ENCODE measurements at regions of chr7 and their contacts with region 1.

Region 1: DNA sequence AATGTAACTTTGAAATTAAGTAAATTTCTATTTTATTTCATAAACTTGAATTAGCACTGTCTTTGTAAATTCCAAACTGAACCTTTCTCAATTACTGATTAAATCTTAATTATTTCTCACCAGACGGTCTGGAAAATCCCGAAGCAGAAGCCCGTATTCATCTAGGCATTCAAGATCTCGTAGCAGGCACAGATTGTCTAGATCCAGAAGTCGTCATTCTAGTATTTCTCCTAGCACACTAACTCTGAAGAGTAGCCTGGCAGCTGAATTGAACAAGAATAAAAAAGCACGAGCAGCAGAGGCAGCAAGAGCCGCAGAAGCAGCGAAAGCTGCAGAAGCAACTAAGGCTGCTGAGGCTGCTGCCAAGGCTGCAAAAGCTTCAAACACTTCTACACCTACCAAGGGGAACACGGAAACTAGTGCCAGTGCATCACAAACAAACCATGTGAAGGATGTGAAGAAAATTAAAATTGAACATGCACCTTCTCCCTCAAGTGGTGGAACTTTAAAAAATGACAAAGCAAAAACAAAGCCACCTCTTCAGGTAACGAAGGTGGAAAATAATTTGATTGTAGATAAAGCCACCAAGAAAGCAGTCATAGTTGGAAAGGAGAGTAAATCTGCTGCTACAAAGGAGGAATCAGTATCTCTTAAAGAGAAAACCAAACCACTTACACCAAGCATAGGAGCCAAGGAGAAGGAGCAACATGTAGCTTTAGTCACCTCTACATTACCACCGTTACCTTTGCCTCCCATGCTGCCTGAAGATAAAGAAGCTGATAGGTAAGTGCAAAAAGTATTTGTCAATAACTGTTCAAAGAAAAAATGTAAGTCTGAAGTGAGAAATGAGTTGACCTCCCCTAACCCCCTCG is 37.7 kb downstream of the CDK13 start:
- DNase-seq: peak in 30 of 35 experiments; percentile 3 to 74 (median 38)
- ATAC-seq: peak; percentile 77 to 94 (median 90)
- H3K4me3 ChIP-seq: no peak overlapping the region
- H3K4me3 Mint-ChIP-seq: peak overlapping the region in 2 of 3 donors; percentile 29 to 40
- H3K27ac ChIP-seq: no peak overlapping the region
- H3K27ac Mint-ChIP-seq: peak overlapping the region; percentile 73 to 77
- H3K4me1 ChIP-seq: peaks cover 18 to 21% of the 10 kb centered on the region in 2 experiments
- H3K4me1 Mint-ChIP-seq: peaks cover 57 to 69% (median 61%) of the 10 kb centered on the region in 3 donors
- H3K27me3 ChIP-seq: no peaks in the 10 kb centered on the region
- H3K27me3 Mint-ChIP-seq: no peaks in the 10 kb centered on the region

Region 2: DNA sequence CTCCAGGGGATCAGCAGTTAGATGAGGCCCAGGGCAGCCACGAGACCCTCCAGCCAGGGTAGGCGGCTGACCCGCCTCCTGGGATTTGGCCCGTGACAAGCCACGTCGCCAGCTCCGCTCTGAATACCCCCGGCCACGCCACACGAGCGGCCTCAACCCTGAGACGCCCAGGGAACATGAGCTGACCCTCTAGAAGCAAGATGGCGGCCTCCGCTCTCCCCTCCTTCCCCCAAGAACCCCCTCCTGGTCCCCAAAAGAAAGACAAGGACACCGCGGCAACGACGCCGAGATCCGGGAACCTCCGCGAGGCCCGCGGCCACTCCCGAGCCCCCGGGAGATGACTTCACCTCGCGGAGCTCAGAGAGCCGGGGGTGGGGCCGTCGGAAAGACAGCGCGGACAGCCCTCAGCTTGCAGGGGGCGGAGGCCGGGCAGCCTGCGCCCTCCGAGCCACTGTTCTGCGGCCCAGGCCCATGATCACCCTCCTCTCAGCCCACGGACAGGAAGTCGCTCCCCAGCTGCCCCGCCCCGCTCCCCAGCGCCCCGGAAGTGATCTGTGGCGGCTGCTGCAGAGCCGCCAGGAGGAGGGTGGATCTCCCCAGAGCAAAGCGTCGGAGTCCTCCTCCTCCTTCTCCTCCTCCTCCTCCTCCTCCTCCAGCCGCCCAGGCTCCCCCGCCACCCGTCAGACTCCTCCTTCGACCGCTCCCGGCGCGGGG is 364.5 kb before region 1 on chr7 and contains the start of gene RALA:
- CTCF ChIA-PET with region 1: interaction called in 1 of 2 experiments, 13 read pairs
- POLR2A ChIA-PET with region 1: no interaction called
- DNase-seq: peak; percentile 77 to 93 (median 88)
- ATAC-seq: peak; percentile 94 to 96 (median 94)
- H3K4me3 ChIP-seq: peak within 1 kb of the TSS; percentile 85 to 92
- H3K4me3 Mint-ChIP-seq: peak within 1 kb of the TSS; percentile 94 to 99 (median 99)
- H3K27ac ChIP-seq: peak within 1 kb of the TSS; percentile 87
- H3K27ac Mint-ChIP-seq: peak within 1 kb of the TSS; percentile 95 to 96
- H3K4me1 ChIP-seq: peaks cover 18 to 33% of the 10 kb centered on the region in 2 experiments
- H3K4me1 Mint-ChIP-seq: peaks cover 52% of the 10 kb centered on the region in 3 donors
- H3K27me3 ChIP-seq: no peaks in the 10 kb centered on the region
- H3K27me3 Mint-ChIP-seq: no peaks in the 10 kb centered on the region
- total RNA-seq, gene RALA: 24.4 to 49.8 (median 36.7) TPM

Region 3: GRCh38 chr7:39702133-39702532 is 285.6 kb before region 1 on chr7:
- CTCF ChIA-PET with region 1: no interaction called
- POLR2A ChIA-PET with region 1: no interaction called
- DNase-seq: no peak
- ATAC-seq: no peak
- H3K4me3 ChIP-seq: no peak overlapping the region
- H3K4me3 Mint-ChIP-seq: no peak overlapping the region
- H3K27ac ChIP-seq: no peak overlapping the region
- H3K27ac Mint-ChIP-seq: peak overlapping the region in 1 of 2 donors; percentile 70
- H3K4me1 ChIP-seq: no peaks in the 10 kb centered on the region
- H3K4me1 Mint-ChIP-seq: peaks cover 0 to 4% (median 2%) of the 10 kb centered on the region in 3 donors
- H3K27me3 ChIP-seq: no peaks in the 10 kb centered on the region
- H3K27me3 Mint-ChIP-seq: no peaks in the 10 kb centered on the region

Region 4: DNA sequence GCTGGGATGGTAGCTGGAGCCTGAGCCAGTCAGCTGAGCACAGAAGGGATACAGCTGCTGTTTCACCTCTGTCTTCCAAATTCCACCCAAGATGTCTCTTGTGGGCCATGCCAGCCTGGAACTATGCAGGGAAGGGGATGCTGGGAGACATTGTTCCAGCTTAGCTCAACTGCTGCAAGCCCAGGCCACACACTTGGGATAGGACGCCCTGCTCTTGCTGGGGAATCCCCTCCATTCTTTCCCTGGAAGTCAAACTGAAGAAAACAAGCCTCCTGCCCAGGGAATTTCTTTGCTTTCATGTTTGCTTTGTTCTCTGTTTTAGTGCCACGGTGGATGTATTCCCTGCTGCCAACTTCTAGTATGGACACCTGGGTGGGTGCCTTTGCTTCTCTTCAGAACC is 92.8 kb before region 1 on chr7:
- CTCF ChIA-PET with region 1: interaction called, 7 to 11 read pairs
- POLR2A ChIA-PET with region 1: no interaction called
- DNase-seq: no peak
- ATAC-seq: no peak
- H3K4me3 ChIP-seq: no peak overlapping the region
- H3K4me3 Mint-ChIP-seq: no peak overlapping the region
- H3K27ac ChIP-seq: no peak overlapping the region
- H3K27ac Mint-ChIP-seq: no peak overlapping the region
- H3K4me1 ChIP-seq: peaks cover 0 to 3% of the 10 kb centered on the region in 2 experiments
- H3K4me1 Mint-ChIP-seq: peaks cover 0 to 3% (median 0%) of the 10 kb centered on the region in 3 donors
- H3K27me3 ChIP-seq: peaks cover 0 to 12% of the 10 kb centered on the region in 2 experiments
- H3K27me3 Mint-ChIP-seq: peaks cover 0 to 5% of the 10 kb centered on the region in 2 donors

Region 5: DNA sequence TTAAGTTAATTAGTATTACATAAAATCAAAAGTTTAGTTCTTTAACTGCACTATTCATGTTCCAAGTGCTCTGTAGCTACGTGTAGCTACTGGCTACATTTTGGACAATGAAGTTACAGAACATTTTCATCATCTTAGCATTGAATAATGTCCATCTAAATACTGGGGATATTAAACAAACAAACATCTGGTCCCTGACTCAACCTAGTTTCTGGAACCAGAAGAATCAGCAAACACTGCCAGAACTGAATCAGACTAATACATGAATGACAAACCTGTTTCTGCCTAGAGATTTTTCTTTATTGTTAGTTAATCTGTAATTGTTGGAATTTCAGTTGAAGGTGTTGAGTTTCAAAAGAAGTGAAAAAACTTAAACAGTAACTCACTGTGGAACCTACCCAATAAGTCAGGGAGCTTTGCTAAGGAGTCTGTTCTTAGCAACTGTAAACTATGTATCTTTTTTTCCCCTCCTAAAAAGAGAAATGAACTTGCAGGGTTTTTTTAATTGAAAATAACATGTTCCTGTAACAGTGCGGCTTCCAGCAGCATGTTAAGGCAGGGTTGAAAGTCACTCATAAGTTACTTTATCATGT is 20.6 kb after region 1 on chr7:
- CTCF ChIA-PET with region 1: no interaction called
- POLR2A ChIA-PET with region 1: no interaction called
- DNase-seq: no peak
- ATAC-seq: no peak
- H3K4me3 ChIP-seq: no peak overlapping the region
- H3K4me3 Mint-ChIP-seq: no peak overlapping the region
- H3K27ac ChIP-seq: no peak overlapping the region
- H3K27ac Mint-ChIP-seq: no peak overlapping the region
- H3K4me1 ChIP-seq: no peaks in the 10 kb centered on the region
- H3K4me1 Mint-ChIP-seq: peaks cover 9 to 16% (median 12%) of the 10 kb centered on the region in 3 donors
- H3K27me3 ChIP-seq: no peaks in the 10 kb centered on the region
- H3K27me3 Mint-ChIP-seq: no peaks in the 10 kb centered on the region

Region 6: DNA sequence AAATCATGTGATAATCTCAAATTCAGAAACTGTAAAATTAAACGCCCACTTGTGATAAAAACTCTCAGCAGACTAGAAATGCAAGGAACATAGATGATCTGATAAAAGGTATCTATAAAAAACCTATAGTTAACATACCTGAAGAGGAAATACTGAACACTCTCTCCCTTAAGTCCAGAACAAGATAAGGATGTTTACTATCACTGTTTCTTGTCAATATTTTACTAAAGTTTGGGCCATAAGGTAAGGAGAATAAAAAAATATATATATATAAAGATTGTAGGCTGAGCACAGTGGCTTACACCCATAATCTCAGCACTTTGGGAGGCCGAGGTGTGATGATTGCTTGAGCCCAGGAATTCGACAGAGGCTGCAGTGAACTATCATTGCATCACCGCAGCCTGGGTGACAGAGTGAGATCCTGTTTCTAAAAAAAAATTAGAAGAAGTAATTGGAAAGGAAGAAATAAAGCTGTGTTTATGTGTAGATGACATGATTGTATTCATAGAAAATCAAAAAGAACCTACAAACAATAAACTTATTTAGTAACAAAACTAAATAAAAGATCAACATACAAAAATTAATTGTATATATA is 118.3 kb after region 1 on chr7:
- CTCF ChIA-PET with region 1: no interaction called
- POLR2A ChIA-PET with region 1: no interaction called
- DNase-seq: no peak
- ATAC-seq: no peak
- H3K4me3 ChIP-seq: no peak overlapping the region
- H3K4me3 Mint-ChIP-seq: no peak overlapping the region
- H3K27ac ChIP-seq: no peak overlapping the region
- H3K27ac Mint-ChIP-seq: no peak overlapping the region
- H3K4me1 ChIP-seq: no peaks in the 10 kb centered on the region
- H3K4me1 Mint-ChIP-seq: no peaks in the 10 kb centered on the region
- H3K27me3 ChIP-seq: no peaks in the 10 kb centered on the region
- H3K27me3 Mint-ChIP-seq: no peaks in the 10 kb centered on the region

Region 7: DNA sequence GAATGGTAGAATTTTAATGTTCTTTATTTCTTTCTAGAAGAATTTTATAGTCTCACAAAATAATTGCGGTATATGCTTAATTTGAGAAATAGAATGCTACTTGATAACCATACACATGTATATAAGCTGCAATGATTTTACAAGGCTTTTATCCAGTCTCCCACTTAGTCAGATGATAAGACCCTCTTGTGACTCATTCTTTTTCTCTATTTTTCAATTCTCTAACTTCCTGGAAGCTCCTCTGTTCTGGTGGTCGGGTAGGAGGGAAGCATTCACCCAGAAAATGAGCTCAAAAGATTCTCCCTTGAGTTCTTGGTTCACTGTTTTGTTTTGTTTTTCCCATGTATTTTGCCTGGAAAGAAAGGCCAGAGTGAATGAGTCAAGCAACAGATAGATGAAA is 1168.6 kb after region 1 on chr7:
- CTCF ChIA-PET with region 1: no interaction called
- POLR2A ChIA-PET with region 1: no interaction called
- DNase-seq: no peak
- ATAC-seq: no peak
- H3K4me3 ChIP-seq: no peak overlapping the region
- H3K4me3 Mint-ChIP-seq: no peak overlapping the region
- H3K27ac ChIP-seq: no peak overlapping the region
- H3K27ac Mint-ChIP-seq: no peak overlapping the region
- H3K4me1 ChIP-seq: no peaks in the 10 kb centered on the region
- H3K4me1 Mint-ChIP-seq: no peaks in the 10 kb centered on the region
- H3K27me3 ChIP-seq: no peaks in the 10 kb centered on the region
- H3K27me3 Mint-ChIP-seq: no peaks in the 10 kb centered on the region

Measured in T-cell (primary cell).